ENCODE measurements at regions of chr16 and their contacts with region 1.

Region 1: DNA sequence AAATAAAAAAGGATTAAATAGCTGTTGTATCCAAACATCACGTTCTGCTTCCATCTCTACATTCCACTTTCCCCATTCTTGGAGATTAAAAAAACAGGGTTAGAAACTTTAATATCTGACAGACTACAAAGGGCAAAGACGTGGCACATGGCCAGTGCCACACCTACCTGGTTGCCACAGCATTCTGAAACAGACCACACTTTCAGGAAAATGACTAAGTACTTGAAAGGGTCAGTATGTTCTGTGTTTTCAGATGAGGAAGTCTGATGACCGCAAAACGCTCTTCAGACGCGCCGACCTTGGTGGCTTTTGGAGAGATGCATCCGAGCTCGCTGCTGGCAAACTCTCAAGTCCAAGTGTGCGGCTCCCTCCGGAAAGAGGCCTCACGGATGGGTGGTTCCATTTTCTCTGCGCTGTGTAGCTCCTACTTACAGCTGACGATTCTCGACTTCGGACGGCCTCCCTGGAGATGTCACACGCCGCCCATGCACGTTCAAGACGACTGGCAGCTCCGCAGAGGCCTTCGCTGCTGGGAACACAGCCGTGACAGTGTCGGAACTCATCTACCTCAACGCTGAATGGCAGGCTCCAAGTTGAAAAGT is 15.5 kb downstream of the MAP1LC3B start:
- DNase-seq: no peak
- ATAC-seq: no peak
- H3K4me3 ChIP-seq: no peak overlapping the region
- H3K27ac ChIP-seq: no peak overlapping the region
- H3K4me1 ChIP-seq: peaks cover 0 to 5% of the 10 kb centered on the region in 2 experiments; a peak in 1 of 5 replicates
- H3K27me3 ChIP-seq: no peaks in the 10 kb centered on the region
- CTCF ChIP-seq: no peak
- EP300 ChIP-seq: no peak
- POLR2A ChIP-seq: no peak
- RAD21 ChIP-seq: no peak

Region 2: GRCh38 chr16:87387942-87388817 is 19.4 kb before region 1 on chr16:
- CTCF ChIA-PET with region 1: no interaction called
- POLR2A ChIA-PET with region 1: interaction called, 51 read pairs
- in situ Hi-C with region 1: no loop called
- intact Hi-C with region 1: no loop called
- DNase-seq: peak; percentile 83 to 98 (median 92)
- ATAC-seq: peak; percentile 84
- H3K4me3 ChIP-seq: no peak overlapping the region
- H3K27ac ChIP-seq: peak overlapping the region; percentile 97
- H3K4me1 ChIP-seq: peaks cover 28 to 40% of the 10 kb centered on the region in 2 experiments; a peak in 4 of 5 replicates
- H3K27me3 ChIP-seq: no peaks in the 10 kb centered on the region
- CTCF ChIP-seq: no peak
- EP300 ChIP-seq: peak; percentile 93
- POLR2A ChIP-seq: peak; percentile 74
- RAD21 ChIP-seq: no peak